Esophagus squamous epithelium (tissue), 5 donors: ENCODE measurements at regions of chr16 and their contacts with region 1.

Region 1: DNA sequence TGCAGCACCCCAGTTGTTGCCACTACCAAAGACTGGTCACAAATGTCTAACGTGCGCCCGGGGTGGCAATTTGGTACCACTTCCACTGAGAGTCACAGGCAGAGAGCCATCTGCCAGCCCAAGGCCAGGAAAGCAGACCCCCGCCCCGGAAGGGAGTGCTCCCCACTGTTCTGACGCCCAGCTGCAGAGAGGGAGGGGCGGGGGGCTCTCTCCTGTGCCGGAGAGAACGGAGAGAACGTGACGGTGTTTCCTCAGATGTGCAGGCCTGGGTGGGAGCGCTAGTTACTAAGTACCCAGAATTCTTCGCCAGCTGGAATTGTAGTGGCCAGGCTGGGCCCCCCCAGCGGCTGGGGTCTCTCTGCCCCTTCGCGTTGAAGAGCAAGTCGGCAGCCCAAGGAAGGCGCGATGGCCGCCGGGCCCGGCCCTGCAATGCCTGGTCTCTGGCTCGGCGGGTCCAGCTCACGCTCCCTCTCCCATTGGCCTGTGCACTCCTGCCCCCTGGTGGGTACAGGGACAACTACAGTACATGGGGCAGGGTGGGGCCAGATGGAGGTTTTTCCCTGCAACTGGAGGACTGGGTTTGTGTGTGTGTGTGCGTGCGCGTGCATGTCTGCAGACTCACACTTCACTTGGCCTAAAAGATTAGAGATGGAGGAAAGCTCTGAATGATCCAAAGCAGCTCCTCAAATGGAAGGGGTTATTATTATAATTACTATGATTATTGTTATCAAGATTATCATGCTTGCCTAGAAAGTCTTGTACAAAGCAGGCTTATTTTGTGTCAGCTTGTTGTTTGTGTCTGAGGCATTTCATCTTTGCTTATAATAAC is 107.1 kb downstream of the AMFR start:
- DNase-seq: no peak
- H3K4me3 ChIP-seq: peak overlapping the region in 3 of 4 donors; percentile 24 to 40 (median 34)
- H3K27ac ChIP-seq: peak overlapping the region in 1 of 4 donors; percentile 31
- H3K4me1 ChIP-seq: peaks cover 0 to 10% (median 3%) of the 10 kb centered on the region in 3 donors
- H3K27me3 ChIP-seq: peaks cover 0 to 12% (median 0%) of the 10 kb centered on the region in 4 donors
- CTCF ChIP-seq: peak; percentile 87 to 97 (median 94)
- POLR2A ChIP-seq: no peak

Region 2: GRCh38 chr16:55655860-55656695 is 662.1 kb before region 1 on chr16 and contains the start of gene SLC6A2:
- intact Hi-C with region 1: no loop called
- DNase-seq: no peak
- H3K4me3 ChIP-seq: peak within 1 kb of the TSS; percentile 20 to 60 (median 40)
- H3K27ac ChIP-seq: no peak within 1 kb of the TSS
- H3K4me1 ChIP-seq: peaks cover 5 to 18% (median 8%) of the 10 kb centered on the region in 3 donors
- H3K27me3 ChIP-seq: peaks cover 3 to 85% (median 10%) of the 10 kb centered on the region in 4 donors
- CTCF ChIP-seq: peak in 2 of 6 experiments; percentile 14 to 38
- POLR2A ChIP-seq: no peak
- total RNA-seq, gene SLC6A2: 0.18 to 0.76 TPM in 2 of 4 donors, not detected in the others

Region 3: GRCh38 chr16:55949518-55949917 is 368.7 kb before region 1 on chr16:
- intact Hi-C with region 1: loop called (anchors 5 kb)
- DNase-seq: no peak
- H3K4me3 ChIP-seq: no peak overlapping the region
- H3K27ac ChIP-seq: no peak overlapping the region
- H3K4me1 ChIP-seq: peaks cover 0 to 3% (median 0%) of the 10 kb centered on the region in 3 donors
- H3K27me3 ChIP-seq: peaks cover 0 to 4% (median 0%) of the 10 kb centered on the region in 4 donors
- CTCF ChIP-seq: no peak
- POLR2A ChIP-seq: no peak

Region 4: GRCh38 chr16:56125922-56126321 is 192.3 kb before region 1 on chr16:
- intact Hi-C with region 1: no loop called
- DNase-seq: no peak
- H3K4me3 ChIP-seq: no peak overlapping the region
- H3K27ac ChIP-seq: no peak overlapping the region
- H3K4me1 ChIP-seq: no peaks in the 10 kb centered on the region
- H3K27me3 ChIP-seq: peaks cover 0 to 20% (median 0%) of the 10 kb centered on the region in 4 donors
- CTCF ChIP-seq: no peak
- POLR2A ChIP-seq: no peak